Mammary epithelial cell (primary cell): ENCODE measurements at regions of chr14 and their contacts with region 1.

Region 1: GRCh38 chr14:55650992-55651391 is 71.0 kb downstream of the KTN1 start:
- DNase-seq: no peak
- H3K4me3 ChIP-seq: no peak overlapping the region
- H3K27ac ChIP-seq: no peak overlapping the region
- H3K4me1 ChIP-seq: no peaks in the 10 kb centered on the region
- H3K27me3 ChIP-seq: no peaks in the 10 kb centered on the region
- CTCF ChIP-seq: no peak

Region 2: DNA sequence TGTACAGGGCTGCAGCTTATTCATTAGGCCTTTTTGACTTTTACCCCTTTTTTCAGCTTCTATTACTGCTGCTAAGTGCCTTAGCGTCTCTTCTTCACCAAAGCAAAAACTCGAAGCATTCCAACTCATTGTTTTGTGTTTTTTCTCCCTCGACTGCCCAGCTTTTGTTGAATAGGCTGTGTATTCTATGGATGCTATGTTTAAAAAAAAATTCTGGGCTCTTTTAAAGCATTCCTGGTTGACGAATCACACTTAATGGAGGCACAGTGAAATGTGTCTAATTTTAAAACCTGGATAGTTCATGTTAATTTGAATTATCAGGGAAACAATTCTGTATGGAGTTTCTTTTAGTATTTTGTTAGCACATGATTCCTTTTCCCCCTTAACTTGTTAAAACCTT is 41.3 kb before region 1 on chr14:
- CTCF ChIA-PET with region 1: no interaction called
- dilution Hi-C with region 1: no loop called
- in situ Hi-C with region 1: no loop called
- intact Hi-C with region 1: no loop called
- DNase-seq: no peak
- H3K4me3 ChIP-seq: no peak overlapping the region
- H3K27ac ChIP-seq: no peak overlapping the region
- H3K4me1 ChIP-seq: peaks cover 31% of the 10 kb centered on the region
- H3K27me3 ChIP-seq: no peaks in the 10 kb centered on the region
- CTCF ChIP-seq: no peak

Region 3: GRCh38 chr14:55689981-55690863 is 39.2 kb after region 1 on chr14:
- CTCF ChIA-PET with region 1: no interaction called
- dilution Hi-C with region 1: no loop called
- in situ Hi-C with region 1: no loop called
- intact Hi-C with region 1: loop called (anchors 2 kb)
- DNase-seq: no peak
- H3K4me3 ChIP-seq: no peak overlapping the region
- H3K27ac ChIP-seq: no peak overlapping the region
- H3K4me1 ChIP-seq: no peaks in the 10 kb centered on the region
- H3K27me3 ChIP-seq: no peaks in the 10 kb centered on the region
- CTCF ChIP-seq: no peak

Region 4: GRCh38 chr14:55789430-55789829 is 138.4 kb after region 1 on chr14:
- CTCF ChIA-PET with region 1: no interaction called
- dilution Hi-C with region 1: no loop called
- in situ Hi-C with region 1: no loop called
- intact Hi-C with region 1: no loop called
- DNase-seq: no peak
- H3K4me3 ChIP-seq: no peak overlapping the region
- H3K27ac ChIP-seq: no peak overlapping the region
- H3K4me1 ChIP-seq: peaks cover 3% of the 10 kb centered on the region
- H3K27me3 ChIP-seq: no peaks in the 10 kb centered on the region
- CTCF ChIP-seq: no peak